BJ (cell line): ENCODE measurements at regions of chr17 and their contacts with region 1.

Region 1: GRCh38 chr17:78804777-78805176 is 22.7 kb upstream of the CYTH1 start:
- DNase-seq: no peak
- H3K4me3 ChIP-seq: no peak overlapping the region
- H3K27me3 ChIP-seq: no peaks in the 10 kb centered on the region
- CTCF ChIP-seq: no peak

Region 2: GRCh38 chr17:78793415-78793814 is 11.4 kb before region 1 on chr17:
- CTCF ChIA-PET with region 1: interaction called, 3 read pairs
- POLR2A ChIA-PET with region 1: interaction called, 12 read pairs
- DNase-seq: no peak
- H3K4me3 ChIP-seq: no peak overlapping the region
- H3K27me3 ChIP-seq: no peaks in the 10 kb centered on the region
- CTCF ChIP-seq: no peak